ENCODE measurements at regions of chr14 and their contacts with region 1.

Region 1: DNA sequence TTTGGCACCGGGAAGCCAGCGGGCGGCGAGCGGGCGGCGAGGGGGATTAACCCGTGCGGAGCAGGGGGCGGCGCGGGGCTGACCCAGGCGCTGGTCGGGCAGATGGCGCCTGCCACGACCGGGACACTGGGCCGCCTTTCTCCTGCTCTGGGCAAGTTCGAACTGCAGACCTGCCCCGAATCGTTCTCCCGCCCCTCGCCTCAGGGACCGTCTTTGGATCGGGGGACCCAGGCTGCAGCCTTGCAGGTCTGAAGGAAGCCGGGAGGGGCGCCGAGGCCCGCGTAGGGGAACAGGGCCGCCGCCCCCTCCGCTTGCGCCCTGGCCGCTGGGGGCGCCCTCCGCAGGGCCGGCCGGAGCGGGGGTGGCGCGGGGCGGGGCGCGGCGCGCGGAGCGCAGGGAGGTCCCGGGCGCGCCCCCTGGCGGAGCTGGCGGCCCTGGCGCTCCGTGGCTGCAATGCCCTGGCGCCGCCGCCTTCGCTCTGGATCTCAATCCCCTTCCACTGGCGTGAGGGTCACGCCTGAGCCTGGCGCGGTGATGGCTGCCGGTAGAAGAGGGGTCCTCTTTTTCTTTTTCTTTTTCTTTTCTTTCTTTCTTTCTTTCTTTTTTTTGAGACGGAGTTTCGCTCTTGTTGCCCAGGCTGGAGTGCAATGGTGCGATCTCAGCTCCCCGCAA is 449 bp upstream of the LTBP2 start:
- DNase-seq: no peak
- H3K4me3 ChIP-seq: peak overlapping the region; percentile 67
- CTCF ChIP-seq: peak; percentile 73

Region 2: GRCh38 chr14:74501135-74501614 is 111.3 kb before region 1 on chr14:
- CTCF ChIA-PET with region 1: interaction called, 16 read pairs
- POLR2A ChIA-PET with region 1: interaction called, 3 read pairs
- DNase-seq: no peak
- H3K4me3 ChIP-seq: no peak overlapping the region
- CTCF ChIP-seq: peak; percentile 92

Region 3: DNA sequence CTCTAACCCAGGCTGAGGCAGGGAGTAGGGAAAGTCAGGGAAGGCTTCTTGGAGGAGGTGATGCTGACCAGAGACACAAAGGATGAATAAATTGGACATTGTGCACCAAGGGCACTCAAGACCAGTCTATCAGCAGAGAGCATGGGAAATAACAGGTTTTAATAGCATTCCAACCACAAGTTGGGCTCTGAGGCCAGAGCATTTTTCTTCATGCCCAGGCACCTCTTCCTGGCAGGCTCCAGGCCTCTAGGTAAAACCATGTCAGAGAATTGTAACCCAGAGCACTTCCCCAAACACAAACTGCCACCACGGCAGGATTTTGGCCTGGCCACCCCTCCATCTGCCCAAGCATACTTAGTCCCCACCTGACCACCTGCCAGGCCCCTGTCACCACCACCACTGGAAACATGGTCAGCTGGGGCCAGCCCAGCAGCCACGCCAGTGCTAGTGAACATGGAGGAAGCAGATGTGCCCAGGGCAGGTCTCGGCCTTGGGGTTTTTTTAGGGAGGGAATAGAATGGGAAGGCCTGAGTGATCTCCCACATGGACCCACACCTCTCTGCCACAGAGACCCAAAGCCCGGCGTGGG is 23.1 kb before region 1 on chr14:
- CTCF ChIA-PET with region 1: interaction called, 65 read pairs
- POLR2A ChIA-PET with region 1: no interaction called
- DNase-seq: no peak
- H3K4me3 ChIP-seq: no peak overlapping the region
- CTCF ChIP-seq: no peak

Region 4: DNA sequence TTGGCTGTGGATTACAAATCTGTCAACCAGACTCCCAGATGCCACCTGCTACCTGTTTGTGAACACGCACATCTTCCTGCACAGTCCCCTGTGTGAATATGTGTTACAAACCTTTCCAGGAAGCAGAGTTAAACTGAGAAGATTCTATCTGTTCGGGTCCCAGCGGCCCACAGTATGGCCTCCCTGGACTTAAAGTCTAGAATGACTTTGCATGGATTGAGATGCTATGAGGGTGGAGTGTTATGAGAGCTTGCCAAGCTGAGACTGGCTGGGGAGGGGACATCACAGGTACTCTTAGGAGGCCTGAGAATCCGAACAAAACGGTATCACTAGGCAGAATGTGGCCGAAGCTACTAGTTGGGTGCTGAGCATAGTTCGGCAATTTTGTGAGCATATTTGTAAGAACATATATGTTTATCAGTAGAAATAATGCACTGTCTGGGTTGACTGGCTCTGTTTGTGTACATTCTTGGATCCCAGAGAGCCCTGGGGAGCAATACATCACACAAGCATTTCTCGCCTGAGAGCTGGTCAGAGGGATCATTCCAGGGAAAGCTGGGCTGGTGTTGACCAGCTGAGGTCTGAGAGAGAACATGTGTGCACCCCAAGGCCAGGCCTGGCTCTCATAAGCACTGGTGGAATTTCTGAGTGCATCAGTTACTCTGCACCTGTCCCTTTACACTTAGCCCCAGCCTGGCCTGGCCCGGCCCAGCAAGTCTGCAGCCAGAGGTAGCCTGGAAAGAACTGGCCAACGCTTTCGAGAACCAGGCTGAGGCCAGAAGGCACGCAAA is 29.3 kb after region 1 on chr14:
- CTCF ChIA-PET with region 1: interaction called, 106 read pairs
- POLR2A ChIA-PET with region 1: interaction called, 4 read pairs
- DNase-seq: no peak
- H3K4me3 ChIP-seq: no peak overlapping the region
- CTCF ChIP-seq: no peak

Region 5: DNA sequence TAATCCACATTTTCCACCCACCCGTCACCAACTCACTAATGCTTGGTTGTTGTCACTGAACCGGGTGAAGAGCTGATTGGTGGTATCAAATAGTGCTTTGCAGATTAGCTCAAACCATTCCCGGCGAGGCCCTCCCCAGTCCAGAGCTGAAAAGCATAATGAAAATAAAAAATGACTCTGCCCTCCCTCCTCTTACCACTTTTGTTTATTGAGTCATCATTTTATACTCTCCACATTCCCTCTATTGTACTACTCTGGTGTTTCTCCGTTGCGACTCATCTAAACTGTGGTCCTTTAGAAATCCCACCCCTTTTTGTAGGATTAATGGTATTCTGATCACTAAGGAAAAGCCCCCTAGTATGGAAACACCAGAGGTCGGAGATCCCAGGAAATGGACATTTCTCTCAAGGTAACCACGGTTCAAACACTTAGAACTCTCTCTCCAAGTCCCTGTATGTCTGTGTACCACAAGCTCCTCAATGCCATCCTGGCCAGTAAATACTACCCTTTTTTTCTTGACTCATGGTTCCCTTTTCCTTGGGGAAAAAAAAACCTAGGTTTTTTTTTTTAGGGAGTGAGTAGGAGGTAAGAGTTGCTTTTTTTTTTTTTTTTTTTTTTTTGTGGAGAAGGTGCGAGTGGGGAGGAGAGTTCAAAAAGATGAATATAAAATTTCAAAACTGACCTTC is 58.4 kb after region 1 on chr14:
- CTCF ChIA-PET with region 1: interaction called, 18 read pairs
- POLR2A ChIA-PET with region 1: no interaction called
- DNase-seq: no peak
- H3K4me3 ChIP-seq: no peak overlapping the region
- CTCF ChIP-seq: no peak

Region 6: DNA sequence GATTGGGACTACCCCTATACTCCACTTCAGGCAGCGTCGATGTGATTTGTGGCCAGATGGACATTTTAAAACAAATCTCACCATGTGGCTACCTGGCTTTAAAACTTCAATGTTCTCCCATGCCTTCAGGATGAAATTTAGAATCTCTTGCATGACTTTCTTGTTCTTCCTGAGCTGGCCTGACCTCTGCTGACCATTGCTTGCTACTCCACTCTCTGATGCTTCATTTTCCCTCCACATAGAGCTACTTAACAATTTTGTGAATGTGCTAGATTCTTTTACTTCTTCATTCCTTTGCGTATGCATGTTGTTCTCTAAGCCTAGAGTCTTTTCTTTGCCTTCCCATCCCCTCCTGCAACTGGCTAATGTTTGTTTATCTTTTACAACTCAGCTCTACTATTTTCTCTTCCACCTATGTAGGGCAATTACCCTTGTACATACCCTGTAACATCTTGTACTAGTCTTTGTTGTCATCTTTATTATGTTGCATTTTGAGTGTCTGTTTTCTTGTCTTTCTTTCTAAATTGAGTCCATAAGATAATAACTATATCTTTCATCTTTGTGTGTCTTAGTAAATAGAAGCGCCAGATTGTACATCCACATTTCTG is 191.8 kb after region 1 on chr14:
- CTCF ChIA-PET with region 1: interaction called, 318 read pairs
- POLR2A ChIA-PET with region 1: interaction called, 3 read pairs
- DNase-seq: peak; percentile 9
- H3K4me3 ChIP-seq: no peak overlapping the region
- CTCF ChIP-seq: peak; percentile 60

Measured in AG04449 (cell line).